ENCODE measurements at regions of chr5 and their contacts with region 1.

Region 1: GRCh38 chr5:132829742-132830435 is 558 bp downstream of the SHROOM1 start:
- DNase-seq: peak; percentile 87
- H3K4me3 Mint-ChIP-seq: peak overlapping the region; percentile 90
- H3K27ac Mint-ChIP-seq: peak overlapping the region; percentile 90
- H3K4me1 Mint-ChIP-seq: peaks cover 21% of the 10 kb centered on the region
- H3K27me3 Mint-ChIP-seq: no peaks in the 10 kb centered on the region
- CTCF ChIP-seq: peak; percentile 98

Region 2: DNA sequence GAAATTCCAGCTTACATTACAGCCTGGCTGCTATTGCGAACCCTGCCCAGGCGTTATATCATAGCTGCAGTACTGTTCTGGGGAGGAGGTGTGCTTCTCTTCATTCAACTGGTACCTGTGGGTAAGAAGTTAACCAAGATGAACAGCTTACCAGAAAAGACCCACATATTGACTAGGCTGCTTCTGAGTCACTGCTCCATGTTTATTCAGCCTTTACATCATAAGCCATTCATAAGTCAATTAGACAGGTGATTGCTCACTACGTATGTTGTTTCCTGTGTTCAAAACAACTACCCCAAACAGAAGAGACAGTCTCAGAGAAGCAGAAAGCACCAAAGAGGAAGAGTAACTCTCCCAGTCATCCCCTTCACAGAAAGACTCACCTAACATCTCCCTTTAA is 495.1 kb before region 1 on chr5:
- CTCF ChIA-PET with region 1: no interaction called
- POLR2A ChIA-PET with region 1: no interaction called
- intact Hi-C with region 1: no loop called
- DNase-seq: peak; percentile 45
- H3K4me3 Mint-ChIP-seq: no peak overlapping the region
- H3K27ac Mint-ChIP-seq: peak overlapping the region; percentile 52
- H3K4me1 Mint-ChIP-seq: peaks cover 8% of the 10 kb centered on the region
- H3K27me3 Mint-ChIP-seq: no peaks in the 10 kb centered on the region
- CTCF ChIP-seq: no peak

Region 3: GRCh38 chr5:132753135-132753987 is 76.5 kb before region 1 on chr5:
- CTCF ChIA-PET with region 1: interaction called, 12 read pairs
- POLR2A ChIA-PET with region 1: no interaction called
- intact Hi-C with region 1: no loop called
- DNase-seq: peak; percentile 37
- H3K4me3 Mint-ChIP-seq: no peak overlapping the region
- H3K27ac Mint-ChIP-seq: no peak overlapping the region
- H3K4me1 Mint-ChIP-seq: no peaks in the 10 kb centered on the region
- H3K27me3 Mint-ChIP-seq: no peaks in the 10 kb centered on the region
- CTCF ChIP-seq: peak; percentile 16

Region 4: GRCh38 chr5:132814503-132815294 is 15.2 kb before region 1 on chr5:
- CTCF ChIA-PET with region 1: interaction called, 50 read pairs
- POLR2A ChIA-PET with region 1: interaction called, 35 read pairs
- intact Hi-C with region 1: no loop called
- DNase-seq: no peak
- H3K4me3 Mint-ChIP-seq: peak overlapping the region; percentile 43
- H3K27ac Mint-ChIP-seq: no peak overlapping the region
- H3K4me1 Mint-ChIP-seq: peaks cover 4% of the 10 kb centered on the region
- H3K27me3 Mint-ChIP-seq: peaks cover 30% of the 10 kb centered on the region
- CTCF ChIP-seq: no peak

Region 5: GRCh38 chr5:132850066-132850465 is 20.2 kb after region 1 on chr5:
- CTCF ChIA-PET with region 1: interaction called, 37 read pairs
- POLR2A ChIA-PET with region 1: interaction called, 11 read pairs
- intact Hi-C with region 1: no loop called
- DNase-seq: no peak
- H3K4me3 Mint-ChIP-seq: no peak overlapping the region
- H3K27ac Mint-ChIP-seq: no peak overlapping the region
- H3K4me1 Mint-ChIP-seq: no peaks in the 10 kb centered on the region
- H3K27me3 Mint-ChIP-seq: no peaks in the 10 kb centered on the region
- CTCF ChIP-seq: no peak

Region 6: DNA sequence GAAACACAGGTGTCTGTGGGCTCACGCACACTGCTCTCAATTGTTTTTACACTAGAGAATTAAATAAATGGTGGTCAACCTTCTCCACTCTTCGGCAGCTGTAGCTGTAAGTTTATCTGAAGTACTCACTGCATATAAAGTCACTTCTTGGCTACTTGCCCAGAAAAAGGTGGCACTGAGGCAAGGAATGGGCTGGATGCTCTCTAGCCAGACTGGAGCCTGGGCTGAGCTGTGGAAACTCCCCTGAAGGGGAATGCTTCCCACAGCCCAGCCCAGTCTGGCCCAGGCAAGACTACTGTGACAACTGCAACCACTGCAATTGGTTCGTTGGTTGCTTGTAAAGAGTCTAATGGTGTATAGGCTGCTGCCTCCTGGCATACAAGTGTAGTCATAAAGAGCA is 48.0 kb after region 1 on chr5:
- CTCF ChIA-PET with region 1: interaction called, 72 read pairs
- POLR2A ChIA-PET with region 1: interaction called, 176 read pairs
- intact Hi-C with region 1: loop called (anchors 1 kb)
- DNase-seq: peak; percentile 28
- H3K4me3 Mint-ChIP-seq: no peak overlapping the region
- H3K27ac Mint-ChIP-seq: no peak overlapping the region
- H3K4me1 Mint-ChIP-seq: peaks cover 3% of the 10 kb centered on the region
- H3K27me3 Mint-ChIP-seq: no peaks in the 10 kb centered on the region
- CTCF ChIP-seq: no peak

Region 7: DNA sequence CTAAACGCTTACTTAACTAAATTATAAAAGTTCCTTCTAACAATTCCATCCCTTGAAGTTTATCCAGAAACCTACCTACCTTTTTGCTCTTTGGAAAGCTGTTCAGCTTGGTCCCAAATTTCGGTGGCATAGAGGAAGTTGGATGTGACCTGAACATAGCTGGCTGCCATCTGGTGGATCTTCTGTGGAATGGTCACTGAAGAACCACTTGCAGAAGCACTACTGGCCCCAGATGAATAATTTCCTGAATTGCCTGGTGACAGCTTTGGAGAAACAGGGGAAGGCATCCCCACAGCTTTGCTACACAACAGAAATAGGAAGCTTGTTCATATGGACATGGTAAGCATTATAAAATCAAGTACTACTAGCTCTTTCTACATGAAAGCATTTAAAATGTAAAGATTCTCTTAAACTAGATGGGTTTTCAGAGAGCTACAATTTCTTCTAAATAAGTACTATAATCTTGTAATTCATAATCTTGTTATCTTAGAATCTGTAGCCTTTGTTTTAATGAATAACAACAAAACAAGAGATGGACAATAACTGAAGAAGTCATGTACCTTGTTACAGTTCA is 53.5 kb after region 1 on chr5:
- CTCF ChIA-PET with region 1: interaction called, 72 read pairs
- POLR2A ChIA-PET with region 1: interaction called, 9 read pairs
- intact Hi-C with region 1: loop called (anchors 1 kb)
- DNase-seq: peak; percentile 80
- H3K4me3 Mint-ChIP-seq: no peak overlapping the region
- H3K27ac Mint-ChIP-seq: no peak overlapping the region
- H3K4me1 Mint-ChIP-seq: peaks cover 8% of the 10 kb centered on the region
- H3K27me3 Mint-ChIP-seq: no peaks in the 10 kb centered on the region
- CTCF ChIP-seq: peak; percentile 70

Region 8: GRCh38 chr5:132889506-132889905 is 59.6 kb after region 1 on chr5:
- CTCF ChIA-PET with region 1: interaction called, 72 read pairs
- POLR2A ChIA-PET with region 1: interaction called, 3 read pairs
- intact Hi-C with region 1: no loop called
- DNase-seq: no peak
- H3K4me3 Mint-ChIP-seq: no peak overlapping the region
- H3K27ac Mint-ChIP-seq: no peak overlapping the region
- H3K4me1 Mint-ChIP-seq: no peaks in the 10 kb centered on the region
- H3K27me3 Mint-ChIP-seq: no peaks in the 10 kb centered on the region
- CTCF ChIP-seq: no peak